CD4-positive, alpha-beta memory T cell (primary cell): ENCODE measurements at regions of chr7 and their contacts with region 1.

Region 1: DNA sequence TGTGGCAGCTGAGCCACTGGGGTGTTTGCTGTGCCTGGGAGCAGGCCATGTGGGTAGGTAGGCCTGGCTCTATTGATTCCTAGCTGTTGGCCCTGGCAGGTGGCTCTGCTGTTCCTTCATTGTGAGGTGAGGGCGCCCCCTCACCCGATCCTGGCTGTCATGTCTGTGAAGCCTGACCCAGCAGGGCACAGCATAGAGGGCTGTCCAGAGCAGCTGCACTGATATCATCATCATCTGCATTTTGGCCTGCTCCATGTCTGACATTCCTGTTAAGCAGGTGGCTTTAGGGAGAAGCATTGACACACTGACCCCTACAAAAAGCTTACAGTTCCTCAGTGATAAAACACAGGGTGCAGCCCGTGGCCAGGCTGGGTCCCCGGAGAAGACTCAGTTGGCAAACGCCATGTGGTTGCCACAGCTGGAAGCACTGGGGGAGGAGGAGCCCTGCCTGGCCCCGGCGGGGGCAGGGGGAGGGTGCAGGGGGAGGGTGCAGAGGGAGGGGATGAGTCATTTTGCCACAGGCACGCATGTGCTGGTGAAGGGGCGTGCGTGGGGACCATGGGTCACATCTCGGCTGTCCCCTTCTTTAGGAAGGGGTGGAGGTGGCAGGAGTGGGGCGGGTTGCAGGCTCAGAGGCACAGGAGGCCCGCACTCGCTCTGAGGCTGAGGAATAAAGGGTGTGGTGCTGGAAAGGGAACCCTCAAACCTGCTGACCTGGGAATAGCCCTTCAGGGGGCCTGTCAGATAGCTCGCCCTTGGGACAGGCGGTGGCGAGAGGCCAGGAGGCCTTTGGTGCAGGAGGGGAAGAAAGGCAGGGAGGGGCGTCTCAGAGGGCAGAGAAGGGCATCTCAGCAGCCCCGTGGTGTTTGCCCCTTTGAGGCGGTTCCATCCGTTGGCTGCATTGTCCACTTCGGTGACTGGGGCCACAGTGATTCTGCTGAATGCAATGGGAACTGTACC is 31.6 kb downstream of the IKZF1 start:
- DNase-seq: peak; percentile 66 to 95 (median 70)
- H3K4me3 ChIP-seq: peak overlapping the region in 1 of 2 donors; percentile 23
- H3K4me3 Mint-ChIP-seq: peak overlapping the region in 1 of 8 donors; percentile 53
- H3K27ac ChIP-seq: peak overlapping the region; percentile 96
- H3K27ac Mint-ChIP-seq: no peak overlapping the region
- H3K4me1 ChIP-seq: peaks cover 100% of the 10 kb centered on the region
- H3K4me1 Mint-ChIP-seq: peaks cover 0 to 63% (median 39%) of the 10 kb centered on the region in 4 donors
- H3K27me3 ChIP-seq: no peaks in the 10 kb centered on the region
- H3K27me3 Mint-ChIP-seq: no peaks in the 10 kb centered on the region

Region 2: GRCh38 chr7:50317221-50317678 is 18.8 kb before region 1 on chr7:
- CTCF ChIA-PET with region 1: interaction called, 27 read pairs
- POLR2A ChIA-PET with region 1: interaction called, 2,673 read pairs
- intact Hi-C with region 1: loop called (anchors 1 kb)
- DNase-seq: peak; percentile 78 to 89 (median 84)
- H3K4me3 ChIP-seq: peak overlapping the region in 1 of 2 donors; percentile 53
- H3K4me3 Mint-ChIP-seq: peak overlapping the region; percentile 78 to 100 (median 92)
- H3K27ac ChIP-seq: peak overlapping the region; percentile 90
- H3K27ac Mint-ChIP-seq: peak overlapping the region in 6 of 7 donors; percentile 93 to 99 (median 98)
- H3K4me1 ChIP-seq: peaks cover 99% of the 10 kb centered on the region
- H3K4me1 Mint-ChIP-seq: peaks cover 73 to 100% (median 86%) of the 10 kb centered on the region in 4 donors
- H3K27me3 ChIP-seq: no peaks in the 10 kb centered on the region
- H3K27me3 Mint-ChIP-seq: no peaks in the 10 kb centered on the region

Region 3: DNA sequence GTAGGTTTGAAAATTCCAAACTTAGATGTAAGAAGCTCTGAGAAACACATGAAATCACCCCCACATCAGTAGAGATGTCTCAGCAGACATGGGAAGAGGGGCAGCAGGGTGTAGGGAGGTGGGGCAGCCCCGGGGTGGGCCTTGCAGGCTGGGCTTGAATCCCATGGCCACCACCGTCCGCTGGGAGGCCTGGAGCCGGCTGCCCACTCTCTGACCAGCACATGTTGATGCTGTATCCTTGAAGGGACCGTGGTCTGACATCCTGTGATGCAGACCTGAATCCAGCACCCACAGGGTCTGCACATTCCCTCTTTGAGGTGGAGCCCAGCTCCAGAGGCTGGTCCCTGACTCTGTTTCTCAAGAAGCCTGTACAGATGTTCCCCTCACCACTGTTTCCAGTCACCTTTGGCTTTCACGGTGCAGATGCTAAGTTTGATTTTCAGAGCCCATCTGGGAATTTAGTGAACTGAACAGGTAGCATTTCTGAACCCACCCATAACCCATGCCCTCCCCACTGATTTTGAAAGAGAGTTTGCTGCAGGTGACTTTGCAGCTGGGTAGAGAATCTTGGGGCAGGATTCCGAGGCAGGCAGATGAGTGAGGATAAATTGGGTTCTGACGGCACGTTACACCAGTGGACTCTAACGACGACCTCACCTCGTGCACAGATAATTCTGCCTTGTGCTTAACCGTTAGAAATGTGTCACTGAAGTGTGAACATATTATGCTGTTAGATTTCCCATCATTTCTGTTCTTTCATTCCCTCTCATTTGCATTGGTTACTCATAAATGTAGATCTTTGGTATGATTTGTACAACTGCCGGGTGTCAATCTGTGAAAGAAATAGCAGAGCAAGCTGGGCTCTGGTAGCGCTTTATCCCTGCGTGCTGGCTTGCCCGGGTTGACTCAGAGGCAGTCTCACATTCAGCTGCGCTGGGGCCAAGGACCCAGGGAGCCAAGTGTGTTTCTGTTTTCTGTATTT is 14.2 kb after region 1 on chr7:
- CTCF ChIA-PET with region 1: interaction called, 26 read pairs
- POLR2A ChIA-PET with region 1: interaction called, 2,673 read pairs
- intact Hi-C with region 1: loop called (anchors 1 kb)
- DNase-seq: peak; percentile 46 to 89 (median 52)
- H3K4me3 ChIP-seq: peak overlapping the region in 1 of 2 donors; percentile 29
- H3K4me3 Mint-ChIP-seq: peak overlapping the region; percentile 69 to 88 (median 78)
- H3K27ac ChIP-seq: peak overlapping the region; percentile 96
- H3K27ac Mint-ChIP-seq: peak overlapping the region in 6 of 7 donors; percentile 97 to 100 (median 98)
- H3K4me1 ChIP-seq: peaks cover 100% of the 10 kb centered on the region
- H3K4me1 Mint-ChIP-seq: peaks cover 79 to 98% (median 92%) of the 10 kb centered on the region in 4 donors
- H3K27me3 ChIP-seq: no peaks in the 10 kb centered on the region
- H3K27me3 Mint-ChIP-seq: no peaks in the 10 kb centered on the region